PC-9 (cell line): ENCODE measurements at regions of chr2 and their contacts with region 1.

Region 1: DNA sequence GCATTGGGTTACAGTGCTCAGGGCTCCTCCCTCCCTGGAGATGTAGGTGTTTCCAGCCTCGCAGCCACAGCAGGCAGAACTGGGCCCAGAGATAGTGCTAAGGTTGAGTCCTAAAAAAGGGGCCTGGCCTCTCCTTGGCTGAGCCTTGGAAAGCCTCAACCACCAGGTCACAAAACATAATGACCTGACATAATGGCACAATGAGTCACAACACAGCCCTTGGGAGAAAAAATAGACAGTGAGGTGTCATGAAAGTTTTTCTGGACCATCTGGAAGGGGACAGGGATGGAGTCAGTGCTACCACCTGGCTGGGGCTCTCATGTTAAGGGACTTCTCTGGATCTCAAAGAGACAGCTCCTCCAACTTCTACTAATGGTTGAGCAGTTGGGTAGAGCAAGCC is 92.4 kb upstream of the LCLAT1 start:
- DNase-seq: no peak
- H3K4me3 ChIP-seq: no peak overlapping the region
- H3K27ac ChIP-seq: no peak overlapping the region
- H3K4me1 ChIP-seq: no peaks in the 10 kb centered on the region
- H3K27me3 ChIP-seq: no peaks in the 10 kb centered on the region
- CTCF ChIP-seq: no peak

Region 2: DNA sequence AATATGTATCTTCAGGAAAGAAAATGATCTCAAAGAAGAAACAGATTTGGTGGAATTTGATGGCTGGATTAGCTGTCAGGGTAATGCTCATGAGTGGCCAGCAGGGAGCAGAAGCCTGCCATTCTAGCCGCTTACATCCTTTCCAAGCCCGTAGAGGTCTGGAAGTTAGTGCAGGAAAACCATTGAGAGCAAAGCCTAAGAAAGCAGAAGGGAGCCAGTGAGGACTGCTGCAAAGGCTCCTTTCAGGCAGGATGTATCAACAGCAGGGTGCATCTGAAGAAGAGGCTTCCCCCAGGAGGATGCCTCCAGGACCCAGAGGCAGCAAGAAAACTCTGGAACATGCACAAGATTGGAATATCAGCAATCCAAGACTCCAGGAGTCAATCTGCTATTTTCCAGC is 146.2 kb before region 1 on chr2:
- CTCF ChIA-PET with region 1: interaction called, 10 read pairs
- POLR2A ChIA-PET with region 1: no interaction called
- intact Hi-C with region 1: no loop called
- DNase-seq: peak; percentile 56 to 59
- H3K4me3 ChIP-seq: no peak overlapping the region
- H3K27ac ChIP-seq: no peak overlapping the region
- H3K4me1 ChIP-seq: no peaks in the 10 kb centered on the region
- H3K27me3 ChIP-seq: no peaks in the 10 kb centered on the region
- CTCF ChIP-seq: peak; percentile 97

Region 3: DNA sequence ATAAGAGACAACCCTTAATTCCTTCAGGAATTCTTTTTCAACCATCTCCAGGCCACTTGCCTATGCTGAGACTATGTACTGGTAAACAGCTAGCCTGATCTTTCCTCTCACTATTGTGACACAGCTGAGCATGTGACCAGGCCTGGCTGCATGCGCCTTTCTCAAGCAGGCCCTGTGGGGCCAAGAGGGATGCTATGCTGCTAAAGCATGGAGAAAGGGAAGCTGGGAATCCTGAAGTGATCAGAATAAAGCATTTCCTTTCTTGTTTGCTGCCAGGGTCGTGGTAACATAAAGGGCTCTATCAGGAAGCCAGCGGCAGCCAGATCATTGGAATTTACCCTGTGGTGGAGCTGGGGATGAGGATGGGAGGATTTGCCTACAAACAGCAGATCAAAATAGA is 62.6 kb after region 1 on chr2:
- CTCF ChIA-PET with region 1: no interaction called
- POLR2A ChIA-PET with region 1: no interaction called
- intact Hi-C with region 1: no loop called
- DNase-seq: no peak
- H3K4me3 ChIP-seq: no peak overlapping the region
- H3K27ac ChIP-seq: no peak overlapping the region
- H3K4me1 ChIP-seq: no peaks in the 10 kb centered on the region
- H3K27me3 ChIP-seq: no peaks in the 10 kb centered on the region
- CTCF ChIP-seq: no peak

Region 4: GRCh38 chr2:31287654-31288053 is 933.0 kb after region 1 on chr2:
- CTCF ChIA-PET with region 1: no interaction called
- POLR2A ChIA-PET with region 1: no interaction called
- intact Hi-C with region 1: no loop called
- DNase-seq: no peak
- H3K4me3 ChIP-seq: no peak overlapping the region
- H3K27ac ChIP-seq: no peak overlapping the region
- H3K4me1 ChIP-seq: peaks cover 7% of the 10 kb centered on the region; the same call in 1 of the 2 replicates
- H3K27me3 ChIP-seq: no peaks in the 10 kb centered on the region
- CTCF ChIP-seq: no peak